BJ (cell line): ENCODE measurements at regions of chr1 and their contacts with region 1.

Region 1: DNA sequence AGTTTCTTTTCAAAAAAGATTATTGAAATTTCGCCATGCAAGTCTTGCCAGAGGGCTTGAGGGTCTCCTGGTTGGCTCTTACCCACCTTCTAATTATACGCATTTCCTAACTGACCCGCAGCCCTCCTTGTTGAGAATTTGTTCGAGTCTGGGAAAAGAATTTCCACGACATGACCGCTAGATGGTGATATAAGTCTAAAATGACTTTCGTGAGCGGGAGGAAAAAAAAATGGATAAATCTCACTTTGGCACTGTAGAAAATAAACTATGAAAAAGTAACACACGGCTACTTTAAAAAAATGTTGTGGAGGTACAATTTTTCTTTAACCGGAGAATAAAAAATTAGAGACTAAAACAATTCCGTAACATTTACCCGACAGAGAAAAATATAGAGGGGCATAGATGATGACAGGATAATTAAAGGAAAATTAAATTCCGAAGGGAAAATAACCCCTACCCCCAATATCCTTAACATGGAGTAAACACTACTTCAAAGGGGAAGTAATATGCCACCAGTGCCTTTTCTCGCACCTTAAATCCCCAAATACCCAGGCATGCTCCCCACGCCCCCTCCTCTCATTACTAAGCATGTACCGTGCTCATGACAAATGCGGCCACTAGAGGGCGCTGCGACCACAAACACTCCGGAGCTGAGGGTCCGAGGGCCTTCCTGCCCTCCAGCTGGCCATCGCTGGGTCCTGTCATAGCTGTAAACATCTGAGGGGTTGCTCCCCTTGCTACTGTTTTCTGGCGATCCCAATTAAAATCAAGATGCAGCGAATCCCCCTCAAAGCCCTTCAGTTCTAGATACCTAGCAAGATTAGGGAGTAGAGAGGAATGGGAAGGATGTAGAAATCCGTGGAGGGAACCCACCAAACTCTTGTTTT is 266.9 kb downstream of the ASTN1 start:
- DNase-seq: no peak
- H3K4me3 ChIP-seq: no peak overlapping the region
- H3K27me3 ChIP-seq: peaks cover 4% of the 10 kb centered on the region; the same call in 1 of the 2 replicates
- CTCF ChIP-seq: peak; percentile 96

Region 2: DNA sequence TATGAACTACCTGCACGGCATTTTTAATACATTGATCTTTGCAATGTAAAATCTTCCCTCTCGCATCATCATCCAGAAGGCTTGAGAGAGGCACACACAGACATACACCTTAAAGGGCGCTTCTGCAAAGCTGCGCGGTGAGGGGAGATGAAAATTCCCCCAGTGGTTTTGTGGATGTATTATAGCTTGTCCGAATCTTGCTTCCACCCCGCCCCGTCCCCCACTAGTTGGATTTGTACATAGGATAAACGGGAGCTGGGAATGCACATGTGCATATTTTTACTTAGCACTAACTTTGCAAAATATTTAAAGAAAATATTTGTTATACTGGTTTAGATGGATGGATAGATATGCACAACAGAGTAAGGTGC is 267.5 kb after region 1 on chr1:
- CTCF ChIA-PET with region 1: interaction called, 10 read pairs
- POLR2A ChIA-PET with region 1: no interaction called
- DNase-seq: no peak
- H3K4me3 ChIP-seq: no peak overlapping the region
- H3K27me3 ChIP-seq: peaks cover 18% of the 10 kb centered on the region
- CTCF ChIP-seq: no peak

Region 3: GRCh38 chr1:177355595-177355994 is 458.0 kb after region 1 on chr1:
- CTCF ChIA-PET with region 1: interaction called, 64 read pairs
- POLR2A ChIA-PET with region 1: no interaction called
- DNase-seq: no peak
- H3K4me3 ChIP-seq: no peak overlapping the region
- H3K27me3 ChIP-seq: no peaks in the 10 kb centered on the region
- CTCF ChIP-seq: peak; percentile 64